GM12878 (cell line): ENCODE measurements at regions of chr20 and their contacts with region 1.

Region 1: GRCh38 chr20:17854307-17854903 is 114.2 kb downstream of the SNX5 start:
- DNase-seq: no peak
- ATAC-seq: peak; percentile 36
- H3K4me3 ChIP-seq: no peak overlapping the region
- H3K27ac ChIP-seq: peak overlapping the region; percentile 17; the same call in 1 of the 2 replicates
- H3K4me1 ChIP-seq: peaks cover 48% of the 10 kb centered on the region
- H3K27me3 ChIP-seq: no peaks in the 10 kb centered on the region
- CTCF ChIP-seq: no peak
- EP300 ChIP-seq: no peak
- POLR2A ChIP-seq: no peak
- RAD21 ChIP-seq: no peak

Region 2: DNA sequence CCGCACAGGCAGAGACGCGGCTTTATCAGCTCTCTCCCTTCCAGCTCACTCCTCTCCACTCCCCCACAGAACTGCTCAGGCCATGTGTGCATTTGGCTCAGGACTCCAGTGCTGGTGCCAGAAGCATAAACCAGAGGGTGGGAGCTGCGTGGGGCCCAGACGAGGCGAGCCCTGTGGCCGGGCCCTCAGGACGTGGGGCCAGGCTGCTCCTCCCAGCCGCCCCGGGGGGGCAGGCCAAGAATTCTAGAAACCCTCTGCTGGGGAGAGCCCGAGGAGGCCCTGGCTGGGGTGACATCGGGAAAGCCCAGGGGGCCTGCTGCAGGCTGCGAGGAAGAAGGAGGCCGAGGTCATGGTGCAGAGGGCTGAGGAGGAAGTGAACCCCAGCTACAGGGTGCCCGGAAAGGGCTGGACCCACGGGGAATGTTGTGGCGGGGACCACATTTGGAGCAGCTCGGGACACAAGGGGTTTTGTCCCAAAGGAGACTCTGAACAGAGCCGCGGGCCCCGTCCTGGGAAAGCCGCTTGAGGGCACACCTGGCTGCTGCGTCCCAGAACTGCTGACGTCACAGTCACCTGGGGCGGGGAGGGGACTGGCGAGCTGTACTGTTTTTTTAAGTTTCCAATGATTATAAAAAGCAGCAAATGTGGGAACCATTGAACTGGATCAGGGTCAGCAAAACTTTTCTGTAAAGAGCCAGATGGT is 47.5 kb before region 1 on chr20:
- CTCF ChIA-PET with region 1: no interaction called
- POLR2A ChIA-PET with region 1: no interaction called
- RAD21 ChIA-PET with region 1: no interaction called
- SMC1A ChIA-PET with region 1: no interaction called
- in situ Hi-C with region 1: no loop called
- intact Hi-C with region 1: no loop called
- DNase-seq: no peak
- ATAC-seq: no peak
- H3K4me3 ChIP-seq: no peak overlapping the region
- H3K27ac ChIP-seq: no peak overlapping the region
- H3K4me1 ChIP-seq: peaks cover 3% of the 10 kb centered on the region; the same call in 1 of the 2 replicates
- H3K27me3 ChIP-seq: no peaks in the 10 kb centered on the region
- CTCF ChIP-seq: no peak
- EP300 ChIP-seq: no peak
- POLR2A ChIP-seq: no peak
- RAD21 ChIP-seq: no peak

Region 3: GRCh38 chr20:17825960-17826843 is 28.2 kb before region 1 on chr20:
- CTCF ChIA-PET with region 1: interaction called, 9 read pairs
- POLR2A ChIA-PET with region 1: interaction called, 3 read pairs
- RAD21 ChIA-PET with region 1: interaction called, 10 read pairs
- SMC1A ChIA-PET with region 1: interaction called, 3 read pairs
- in situ Hi-C with region 1: no loop called
- intact Hi-C with region 1: no loop called
- DNase-seq: peak; percentile 74
- ATAC-seq: peak; percentile 96
- H3K4me3 ChIP-seq: no peak overlapping the region
- H3K27ac ChIP-seq: peak overlapping the region; percentile 69
- H3K4me1 ChIP-seq: peaks cover 18% of the 10 kb centered on the region
- H3K27me3 ChIP-seq: no peaks in the 10 kb centered on the region
- CTCF ChIP-seq: no peak
- EP300 ChIP-seq: peak; percentile 59 to 94; a peak in 3 of 4 replicates
- POLR2A ChIP-seq: no peak
- RAD21 ChIP-seq: peak; percentile 16; the same call in 1 of the 2 replicates

Region 4: DNA sequence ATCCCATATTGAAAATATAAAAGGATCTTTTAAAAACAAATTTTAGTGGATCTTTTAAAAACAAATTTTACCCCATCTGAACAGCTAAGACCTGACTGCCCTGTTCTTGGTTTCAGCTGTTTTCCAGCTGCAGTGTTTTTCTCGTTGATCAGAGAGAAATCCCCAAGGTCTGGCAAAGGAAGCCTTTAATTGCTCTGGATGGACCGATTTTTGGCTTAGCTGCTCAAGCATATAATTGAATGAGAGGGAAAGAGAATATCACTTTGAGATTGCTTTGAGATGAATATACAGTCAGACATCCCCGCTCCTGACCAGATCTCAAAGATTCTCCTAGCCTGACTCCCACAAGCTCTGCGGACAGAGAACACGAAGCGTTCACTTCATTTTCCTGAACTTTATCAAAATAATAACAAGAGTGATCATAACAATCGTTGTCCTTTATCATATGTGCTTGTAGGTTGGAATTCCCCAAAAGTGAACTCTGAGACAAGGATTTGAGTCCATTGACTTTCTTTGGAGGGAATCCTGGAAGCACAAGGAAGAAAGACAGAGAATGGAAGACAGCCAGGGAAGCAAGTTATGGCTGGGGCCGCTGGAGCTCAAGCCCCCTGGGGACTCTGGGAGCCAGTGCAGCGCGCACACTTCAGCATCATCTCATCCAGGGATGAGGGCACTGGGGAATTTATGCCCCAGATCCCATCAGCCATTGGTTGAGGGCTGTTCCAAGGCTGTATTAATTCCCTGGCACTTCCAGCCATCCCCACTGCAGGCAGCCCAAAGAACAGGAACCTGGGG is 12.9 kb after region 1 on chr20:
- CTCF ChIA-PET with region 1: interaction called, 3 read pairs
- POLR2A ChIA-PET with region 1: interaction called, 4 read pairs
- RAD21 ChIA-PET with region 1: interaction called, 5 read pairs
- SMC1A ChIA-PET with region 1: interaction called, 14 read pairs
- in situ Hi-C with region 1: no loop called
- intact Hi-C with region 1: no loop called
- DNase-seq: no peak
- ATAC-seq: no peak
- H3K4me3 ChIP-seq: no peak overlapping the region
- H3K27ac ChIP-seq: no peak overlapping the region
- H3K4me1 ChIP-seq: peaks cover 5% of the 10 kb centered on the region; the same call in 1 of the 2 replicates
- H3K27me3 ChIP-seq: no peaks in the 10 kb centered on the region; a peak in 1 of 4 replicates
- CTCF ChIP-seq: no peak
- EP300 ChIP-seq: no peak
- POLR2A ChIP-seq: no peak
- RAD21 ChIP-seq: no peak